Ovary (tissue), 10 donors: ENCODE measurements at regions of chr3 and their contacts with region 1.

Region 1: GRCh38 chr3:116083686-116084085 is 361.6 kb downstream of the LSAMP start:
- DNase-seq: no peak
- H3K4me3 ChIP-seq: no peak overlapping the region
- H3K27ac ChIP-seq: no peak overlapping the region
- H3K4me1 ChIP-seq: no peaks in the 10 kb centered on the region
- H3K27me3 ChIP-seq: no peaks in the 10 kb centered on the region
- CTCF ChIP-seq: no peak
- EP300 ChIP-seq: no peak
- POLR2A ChIP-seq: no peak

Region 2: GRCh38 chr3:115423170-115423569 is 660.5 kb before region 1 on chr3:
- intact Hi-C with region 1: loop called in 1 of 4 experiments (anchors 5 kb)
- DNase-seq: no peak
- H3K4me3 ChIP-seq: no peak overlapping the region
- H3K27ac ChIP-seq: no peak overlapping the region
- H3K4me1 ChIP-seq: no peaks in the 10 kb centered on the region
- H3K27me3 ChIP-seq: no peaks in the 10 kb centered on the region
- CTCF ChIP-seq: no peak
- EP300 ChIP-seq: no peak
- POLR2A ChIP-seq: no peak